ENCODE measurements at regions of chr2 and their contacts with region 1.

Region 1: DNA sequence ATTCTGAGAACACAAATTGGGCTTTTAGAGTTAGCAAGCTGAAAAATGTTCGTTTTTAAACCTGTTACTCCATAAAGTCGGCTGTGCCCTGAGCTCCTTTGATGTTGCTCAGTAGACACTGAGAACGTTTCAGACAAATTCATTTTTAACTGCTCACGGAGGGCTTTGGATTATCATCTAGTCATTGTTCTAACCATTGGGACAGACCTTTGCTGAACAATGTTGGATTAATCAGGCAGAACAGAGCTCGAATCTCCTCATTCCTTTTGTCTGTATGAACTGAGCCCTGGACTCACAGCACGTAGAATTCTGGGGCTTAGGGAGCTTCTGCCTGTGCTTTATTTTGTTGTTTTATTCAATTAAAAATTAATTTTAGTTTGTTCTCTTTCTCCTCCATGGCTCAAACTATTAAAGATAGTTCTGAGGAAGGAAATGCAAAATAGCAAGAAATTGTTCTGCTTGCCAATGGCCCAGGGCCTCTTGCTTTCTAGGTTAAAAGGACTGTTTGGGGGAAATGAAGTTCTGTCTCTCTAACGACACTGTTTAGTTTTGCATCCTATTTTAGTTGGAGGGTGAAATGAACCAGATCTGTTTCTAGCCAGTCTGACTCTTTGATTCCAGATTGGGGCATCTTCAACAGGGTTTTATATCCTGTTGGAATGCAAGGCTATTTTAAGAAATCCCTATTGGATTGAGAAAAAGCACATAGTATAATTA is 114.7 kb upstream of the CXCR4 start:
- DNase-seq: no peak
- ATAC-seq: peak; percentile 59
- H3K4me3 Mint-ChIP-seq: peak overlapping the region; percentile 15
- H3K27ac Mint-ChIP-seq: peak overlapping the region; percentile 37
- H3K4me1 Mint-ChIP-seq: peaks cover 69% of the 10 kb centered on the region
- H3K27me3 Mint-ChIP-seq: no peaks in the 10 kb centered on the region
- CTCF ChIP-seq: no peak

Region 2: GRCh38 chr2:136217996-136218395 is 14.6 kb before region 1 on chr2:
- CTCF ChIA-PET with region 1: interaction called, 13 read pairs
- POLR2A ChIA-PET with region 1: interaction called, 82 read pairs
- intact Hi-C with region 1: loop called (anchors 1 kb)
- DNase-seq: no peak
- ATAC-seq: peak; percentile 59
- H3K4me3 Mint-ChIP-seq: no peak overlapping the region
- H3K27ac Mint-ChIP-seq: peak overlapping the region; percentile 75
- H3K4me1 Mint-ChIP-seq: peaks cover 96% of the 10 kb centered on the region
- H3K27me3 Mint-ChIP-seq: no peaks in the 10 kb centered on the region
- CTCF ChIP-seq: no peak